Activated CD4-positive, alpha-beta T cell treated with anti-CD3 and anti-CD28 coated beads for 36 hours (primary cell): ENCODE measurements at regions of chrX and their contacts with region 1.

Region 1: DNA sequence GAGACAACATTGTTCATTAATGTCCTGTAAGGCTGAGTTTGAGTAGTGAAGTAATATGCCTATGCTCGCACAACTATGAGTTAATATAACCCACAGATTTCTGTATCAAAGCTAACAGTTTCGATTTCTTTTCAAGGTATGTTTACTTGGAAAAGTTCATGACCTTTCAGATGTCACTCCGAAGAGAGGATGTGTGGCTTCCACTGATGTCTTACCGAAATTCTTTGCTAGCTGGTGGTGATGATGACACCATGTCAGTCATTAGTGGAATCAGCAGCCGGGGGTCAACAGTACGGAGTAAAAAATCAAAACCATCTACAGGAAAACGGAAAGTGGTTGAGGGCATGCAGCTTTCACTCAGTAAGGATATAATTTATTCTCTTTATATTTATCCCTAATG is 124.9 kb downstream of the STAG2 start:
- DNase-seq: peak; percentile 58
- ATAC-seq: peak; percentile 96
- H3K4me3 Mint-ChIP-seq: peak overlapping the region; percentile 16
- H3K27ac Mint-ChIP-seq: peak overlapping the region; percentile 66
- H3K4me1 Mint-ChIP-seq: peaks cover 22% of the 10 kb centered on the region
- H3K27me3 Mint-ChIP-seq: no peaks in the 10 kb centered on the region

Region 2: GRCh38 chrX:123720483-123720882 is 365.9 kb before region 1 on chrX:
- CTCF ChIA-PET with region 1: no interaction called
- POLR2A ChIA-PET with region 1: no interaction called
- intact Hi-C with region 1: no loop called
- DNase-seq: no peak
- ATAC-seq: no peak
- H3K4me3 Mint-ChIP-seq: no peak overlapping the region
- H3K27ac Mint-ChIP-seq: no peak overlapping the region
- H3K4me1 Mint-ChIP-seq: peaks cover 25% of the 10 kb centered on the region
- H3K27me3 Mint-ChIP-seq: no peaks in the 10 kb centered on the region

Region 3: GRCh38 chrX:124358800-124359383 is 272.5 kb after region 1 on chrX:
- CTCF ChIA-PET with region 1: no interaction called
- POLR2A ChIA-PET with region 1: no interaction called
- intact Hi-C with region 1: loop called in 1 of 2 experiments (anchors 10 kb)
- DNase-seq: no peak
- ATAC-seq: peak; percentile 69
- H3K4me3 Mint-ChIP-seq: peak overlapping the region; percentile 68
- H3K27ac Mint-ChIP-seq: peak overlapping the region; percentile 84
- H3K4me1 Mint-ChIP-seq: peaks cover 53% of the 10 kb centered on the region
- H3K27me3 Mint-ChIP-seq: no peaks in the 10 kb centered on the region